ENCODE measurements at regions of chr2 and their contacts with region 1.

Region 1: GRCh38 chr2:174248187-174248997 is at the start of gene OLA1:
- DNase-seq: peak; percentile 94 to 97
- ATAC-seq: peak; percentile 96 to 99 (median 96)
- H3K4me3 ChIP-seq: peak within 1 kb of the TSS; percentile 87
- H3K4me3 Mint-ChIP-seq: peak within 1 kb of the TSS; percentile 90
- H3K27ac ChIP-seq: peak within 1 kb of the TSS; percentile 70
- H3K27ac Mint-ChIP-seq: peak within 1 kb of the TSS; percentile 78 to 91
- H3K4me1 ChIP-seq: peaks cover 13% of the 10 kb centered on the region
- H3K4me1 Mint-ChIP-seq: peaks cover 19 to 29% of the 10 kb centered on the region in 2 donors
- H3K27me3 ChIP-seq: no peaks in the 10 kb centered on the region
- H3K27me3 Mint-ChIP-seq: peaks cover 2 to 6% of the 10 kb centered on the region in 2 donors
- CTCF ChIP-seq: no peak
- total RNA-seq, gene OLA1: 42.3 to 45.9 (median 43.9) TPM

Region 2: DNA sequence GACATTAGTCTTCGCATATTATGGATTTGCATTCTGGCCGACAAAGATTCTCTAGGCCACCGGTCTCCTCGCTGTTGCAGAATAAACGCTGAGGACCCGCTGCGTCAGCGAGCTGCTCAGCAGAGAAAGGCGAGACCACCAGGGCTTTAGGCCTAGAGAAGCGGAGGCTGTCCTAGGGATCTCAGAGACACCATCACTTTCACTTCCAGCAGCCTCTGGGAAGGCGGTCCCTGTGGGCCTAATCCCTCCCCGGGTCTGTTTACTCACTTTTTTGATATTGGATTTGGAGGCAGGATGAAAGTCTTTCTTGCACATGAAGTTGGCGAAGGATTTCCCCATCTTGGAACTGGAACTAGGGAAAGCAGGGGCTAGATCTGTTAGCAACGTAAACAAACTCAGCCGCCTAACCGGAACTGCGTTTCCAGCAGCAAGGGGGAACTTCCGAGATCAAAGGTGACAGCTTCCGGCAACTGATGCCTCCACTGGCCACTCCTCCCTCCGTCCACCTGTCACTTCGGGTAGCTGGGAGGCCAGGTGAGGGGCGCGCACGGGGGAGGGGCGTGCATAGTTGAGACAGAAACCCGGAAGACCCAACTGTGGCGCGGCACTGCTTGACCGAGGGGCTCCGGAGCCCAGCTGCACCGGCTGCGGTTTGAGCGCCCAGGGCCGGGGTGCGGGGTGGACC is 147.0 kb after region 1 on chr2 and contains the start of gene SCRN3:
- intact Hi-C with region 1: loop called (anchors 1 kb)
- DNase-seq: peak; percentile 68 to 90
- ATAC-seq: peak; percentile 88 to 93 (median 92)
- H3K4me3 ChIP-seq: peak within 1 kb of the TSS; percentile 96
- H3K4me3 Mint-ChIP-seq: peak within 1 kb of the TSS; percentile 95
- H3K27ac ChIP-seq: peak within 1 kb of the TSS; percentile 98
- H3K27ac Mint-ChIP-seq: peak within 1 kb of the TSS; percentile 95 to 99
- H3K4me1 ChIP-seq: peaks cover 8% of the 10 kb centered on the region
- H3K4me1 Mint-ChIP-seq: peaks cover 33 to 60% of the 10 kb centered on the region in 2 donors
- H3K27me3 ChIP-seq: no peaks in the 10 kb centered on the region
- H3K27me3 Mint-ChIP-seq: no peaks in the 10 kb centered on the region
- CTCF ChIP-seq: no peak
- total RNA-seq, gene SCRN3: 16.6 to 20.6 (median 16.9) TPM

Measured in natural killer cell (primary cell).